ENCODE measurements at regions of chr7 and their contacts with region 1.

Region 1: DNA sequence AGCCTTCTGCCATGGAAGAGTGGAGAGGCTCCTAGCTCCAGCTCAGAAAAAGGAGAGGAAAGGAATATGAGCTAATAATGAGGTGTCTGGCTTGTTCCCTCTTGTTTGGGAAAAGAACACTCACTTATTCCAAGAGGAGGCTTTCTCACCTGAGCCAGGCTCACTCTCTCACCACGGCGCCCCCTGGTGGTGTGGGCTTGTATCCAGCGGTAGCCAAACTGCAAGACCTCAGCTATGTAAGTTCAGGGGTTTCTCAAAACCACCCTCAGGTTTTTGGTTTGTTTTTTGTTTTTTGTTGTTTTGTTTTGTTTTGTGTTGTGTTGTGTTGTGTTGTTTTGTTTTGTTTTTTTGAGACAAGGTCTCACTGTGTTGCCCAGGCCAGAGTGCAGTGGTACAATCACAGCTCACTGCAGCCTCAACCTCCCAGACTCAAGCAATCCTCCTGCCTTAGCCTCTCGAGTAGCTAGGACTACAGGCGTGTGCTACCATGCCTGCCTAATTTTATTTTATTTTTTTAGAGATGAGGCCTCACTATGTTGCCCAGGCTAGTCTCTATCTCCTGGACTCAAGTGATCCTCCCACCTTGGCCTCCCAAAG is 124.0 kb downstream of the TMEM130 start:
- DNase-seq: peak; percentile 66 to 80 (median 71)
- H3K4me3 ChIP-seq: no peak overlapping the region
- H3K27ac ChIP-seq: no peak overlapping the region
- H3K4me1 ChIP-seq: no peaks in the 10 kb centered on the region
- H3K27me3 ChIP-seq: peaks cover 0 to 10% (median 4%) of the 10 kb centered on the region in 5 experiments

Region 2: DNA sequence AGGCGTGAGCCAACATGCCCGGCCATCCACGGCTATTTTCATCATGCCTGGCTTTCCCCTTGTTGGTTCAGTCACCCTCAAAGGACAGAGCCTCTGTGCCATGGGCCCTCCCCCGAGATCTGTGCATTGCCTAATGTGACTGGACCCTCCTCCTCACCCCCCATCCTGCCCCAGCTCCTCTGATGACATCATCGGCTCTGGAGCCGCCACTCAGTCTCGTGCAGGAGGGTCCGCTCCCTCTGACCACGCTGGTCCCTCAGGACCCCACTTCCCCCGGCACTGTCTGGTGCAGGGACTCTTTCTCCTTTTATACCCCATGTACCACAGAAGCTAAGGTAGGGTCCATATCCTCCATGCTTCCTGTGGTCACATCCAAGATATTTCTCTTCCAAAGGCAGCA is 311.7 kb before region 1 on chr7:
- CTCF ChIA-PET with region 1: interaction called, 22 read pairs
- POLR2A ChIA-PET with region 1: no interaction called
- DNase-seq: no peak
- H3K4me3 ChIP-seq: no peak overlapping the region
- H3K27ac ChIP-seq: no peak overlapping the region
- H3K4me1 ChIP-seq: no peaks in the 10 kb centered on the region
- H3K27me3 ChIP-seq: peaks cover 0 to 2% (median 0%) of the 10 kb centered on the region in 5 experiments

Region 3: DNA sequence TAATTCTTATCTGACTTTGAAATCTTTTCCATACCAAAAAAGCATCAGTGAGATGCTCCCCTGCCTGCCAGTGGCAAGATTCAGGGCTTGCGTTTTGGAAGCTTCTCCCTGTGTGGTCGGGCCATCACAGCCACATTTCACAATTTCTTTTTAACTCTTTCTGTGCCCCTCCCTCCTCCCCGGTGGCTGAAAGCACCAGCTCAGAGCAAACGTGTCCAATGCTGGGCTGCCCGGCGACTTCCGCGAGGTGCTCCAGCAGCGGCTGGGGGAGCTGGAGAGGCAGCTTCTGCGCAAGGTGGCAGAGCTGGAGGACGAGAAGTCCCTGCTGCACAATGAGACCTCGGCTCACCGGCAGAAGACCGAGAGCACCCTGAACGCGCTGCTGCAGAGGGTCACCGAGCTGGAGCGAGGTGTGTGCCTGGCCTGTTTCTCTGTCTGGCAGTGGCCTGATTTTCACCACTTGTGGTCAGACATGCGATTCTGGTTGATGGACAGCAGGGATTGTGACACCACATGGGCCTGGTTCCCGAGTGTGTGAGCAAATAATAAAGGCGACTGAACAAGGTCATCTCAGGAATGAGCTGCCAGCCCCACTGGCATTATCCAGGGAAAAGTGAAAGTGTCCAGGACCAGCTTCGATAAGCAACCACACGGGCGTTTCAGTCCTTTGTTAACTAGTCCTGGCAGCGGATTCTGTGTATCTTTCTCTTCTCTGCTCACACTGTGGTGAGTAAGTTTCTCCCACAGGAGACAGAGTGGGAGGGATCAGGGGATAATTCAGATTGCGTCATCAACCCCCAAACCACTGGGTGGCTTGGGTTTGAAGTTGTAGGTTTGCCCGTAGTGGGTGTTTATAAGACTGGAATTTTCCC is 126.1 kb before region 1 on chr7:
- CTCF ChIA-PET with region 1: interaction called, 11 read pairs
- POLR2A ChIA-PET with region 1: no interaction called
- DNase-seq: peak in 2 of 3 donors; percentile 56 to 70
- H3K4me3 ChIP-seq: peak overlapping the region in 4 of 7 experiments; percentile 1 to 28 (median 6)
- H3K27ac ChIP-seq: no peak overlapping the region
- H3K4me1 ChIP-seq: peaks cover 4 to 54% (median 35%) of the 10 kb centered on the region in 4 experiments
- H3K27me3 ChIP-seq: peaks cover 13 to 85% (median 34%) of the 10 kb centered on the region in 5 experiments

Region 4: DNA sequence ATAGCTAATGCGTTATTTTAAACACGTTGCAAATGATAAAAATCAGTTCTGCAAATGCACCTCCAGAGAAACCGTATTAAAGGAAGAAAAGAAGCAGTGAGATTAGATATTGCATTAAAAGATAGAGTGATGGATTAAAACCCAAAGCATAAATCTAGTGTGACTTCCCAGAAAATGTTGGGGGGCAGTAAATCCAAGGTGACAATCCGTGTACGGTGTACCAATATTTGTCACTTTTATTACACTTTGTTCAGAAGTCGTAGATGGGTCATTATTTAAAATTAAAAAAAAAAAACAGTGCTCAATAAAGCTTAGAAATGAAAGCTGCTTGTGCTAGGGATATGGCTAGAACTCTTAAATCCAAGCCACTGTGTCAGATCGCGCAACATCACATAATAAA is 17.6 kb after region 1 on chr7:
- CTCF ChIA-PET with region 1: interaction called, 21 read pairs
- POLR2A ChIA-PET with region 1: no interaction called
- DNase-seq: no peak
- H3K4me3 ChIP-seq: no peak overlapping the region
- H3K27ac ChIP-seq: no peak overlapping the region
- H3K4me1 ChIP-seq: no peaks in the 10 kb centered on the region
- H3K27me3 ChIP-seq: peaks cover 0 to 22% (median 2%) of the 10 kb centered on the region in 5 experiments